Activated T-helper 2 cell treated with anti-CD3 and anti-CD28 coated beads, Interferon-gamma antibody, Interleukin-2, Interleukin-4, amounts not matched to agents 10 μg/mL and 5 μg/mL and 100 μg/mL, durations not matched to agents 14 hours and 24 hours and 36 hours (primary cell): ENCODE measurements at regions of chr19 and their contacts with region 1.

Region 1: DNA sequence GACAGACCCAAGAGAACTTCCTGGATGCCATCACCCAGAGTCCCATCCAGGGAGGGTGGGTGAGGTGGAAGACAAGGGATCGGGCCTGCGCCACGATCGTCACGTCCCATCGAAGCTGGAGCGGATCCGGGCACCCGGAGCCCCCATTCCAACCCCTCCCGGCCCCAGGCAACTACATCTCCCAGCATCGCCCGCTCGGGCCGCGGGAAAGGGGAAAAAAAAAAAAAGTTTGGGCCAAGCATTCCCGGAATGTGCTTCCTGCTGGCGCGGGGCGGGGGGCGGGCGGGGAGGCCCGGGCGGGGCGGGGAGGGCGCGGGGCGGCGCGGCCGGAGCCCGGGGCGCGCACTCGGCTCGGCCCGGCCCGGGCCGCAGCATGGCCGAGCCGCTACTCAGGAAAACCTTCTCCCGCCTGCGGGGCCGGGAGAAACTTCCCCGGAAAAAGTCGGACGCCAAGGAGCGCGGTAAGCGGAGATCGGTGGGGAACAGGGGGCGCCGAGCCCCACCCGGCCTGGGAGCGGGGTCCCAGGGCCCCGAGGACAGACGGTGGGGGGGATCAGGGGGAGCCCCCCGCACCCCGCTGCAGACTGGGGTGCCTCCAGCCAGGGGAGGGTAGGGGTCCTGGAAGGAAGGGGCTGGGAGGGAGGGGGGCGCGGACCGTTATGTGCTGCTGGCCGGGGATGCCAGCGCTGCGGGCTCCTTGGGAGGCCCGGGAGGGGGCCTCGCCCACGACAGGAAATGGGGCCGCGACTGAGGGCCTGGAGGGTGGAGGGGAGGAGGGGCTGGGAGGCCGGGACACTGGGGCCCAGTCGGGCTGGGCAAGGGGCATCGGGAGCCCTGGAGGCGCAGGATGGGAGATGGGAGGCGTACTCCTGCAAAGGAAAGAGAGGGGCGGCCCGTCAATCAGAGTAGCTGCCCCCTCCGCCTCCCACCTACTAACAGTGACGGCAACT is at the start of gene SYDE1:
- DNase-seq: no peak
- H3K4me3 Mint-ChIP-seq: peak within 1 kb of the TSS; percentile 80
- H3K27ac Mint-ChIP-seq: peak within 1 kb of the TSS; percentile 68
- H3K4me1 Mint-ChIP-seq: peaks cover 7% of the 10 kb centered on the region
- H3K27me3 Mint-ChIP-seq: peaks cover 17% of the 10 kb centered on the region
- total RNA-seq, gene SYDE1: 1.9 and 2.5 TPM in 2 replicates

Region 2: GRCh38 chr19:15125232-15126067 is 18.1 kb after region 1 on chr19:
- intact Hi-C with region 1: loop called (anchors 2 kb)
- DNase-seq: peak; percentile 97
- H3K4me3 Mint-ChIP-seq: peak overlapping the region; percentile 99
- H3K27ac Mint-ChIP-seq: peak overlapping the region; percentile 99
- H3K4me1 Mint-ChIP-seq: peaks cover 26% of the 10 kb centered on the region
- H3K27me3 Mint-ChIP-seq: no peaks in the 10 kb centered on the region

Region 3: DNA sequence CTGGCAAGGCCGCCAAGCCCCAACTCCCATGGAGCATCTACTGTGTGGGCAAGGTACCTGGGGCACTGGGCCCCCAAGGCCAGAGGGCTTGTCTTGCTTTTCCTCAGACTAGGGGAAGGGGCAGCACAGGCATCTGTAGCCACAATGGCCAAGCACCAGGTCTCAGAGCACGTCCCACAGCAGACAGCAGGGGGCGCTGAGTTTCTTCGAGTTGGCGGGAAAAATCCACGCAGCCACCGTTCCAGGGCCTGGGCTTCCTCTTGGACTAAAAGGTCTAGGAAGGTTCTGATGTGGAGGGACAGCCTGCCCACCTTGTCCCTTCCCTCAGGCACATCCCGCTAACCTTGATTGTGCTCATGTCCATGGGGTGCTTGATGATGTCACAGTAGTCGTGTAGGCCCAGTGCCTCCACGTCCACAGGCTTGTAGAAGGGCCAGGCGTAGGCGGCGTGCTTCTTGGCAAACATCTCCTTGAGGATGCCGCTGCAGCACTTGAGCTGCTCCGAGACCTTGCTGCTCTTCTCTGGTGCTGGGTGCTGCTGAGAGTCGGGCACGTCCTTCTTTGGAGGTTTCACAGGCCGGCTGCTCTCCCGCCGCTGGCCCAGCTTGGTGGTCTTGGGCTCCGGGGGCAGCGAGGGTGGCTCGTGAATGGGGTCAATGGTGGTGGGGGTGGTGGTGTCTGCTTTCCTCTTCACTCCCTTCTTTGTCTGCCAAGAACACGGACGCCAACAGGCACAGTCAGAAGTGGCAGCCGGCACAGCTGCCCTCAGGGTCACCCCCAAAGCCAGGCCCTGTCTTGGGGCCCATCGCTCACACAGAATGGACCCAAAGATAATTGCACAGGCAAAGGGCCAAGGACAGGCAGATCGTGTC is 157.0 kb after region 1 on chr19:
- intact Hi-C with region 1: no loop called
- DNase-seq: peak; percentile 53
- H3K4me3 Mint-ChIP-seq: no peak overlapping the region
- H3K27ac Mint-ChIP-seq: peak overlapping the region; percentile 28
- H3K4me1 Mint-ChIP-seq: peaks cover 1% of the 10 kb centered on the region
- H3K27me3 Mint-ChIP-seq: no peaks in the 10 kb centered on the region